ENCODE measurements at regions of chr5 and their contacts with region 1.

Region 1: GRCh38 chr5:100903039-100903887 is at the start of gene ST8SIA4:
- DNase-seq: peak; percentile 91
- H3K4me3 ChIP-seq: peak within 1 kb of the TSS; percentile 55 to 98 (median 97)
- H3K27ac ChIP-seq: peak within 1 kb of the TSS; percentile 80
- H3K4me1 ChIP-seq: peaks cover 19% of the 10 kb centered on the region
- H3K27me3 ChIP-seq: no peaks in the 10 kb centered on the region
- CTCF ChIP-seq: no peak
- POLR2A ChIP-seq: peak; percentile 57
- total RNA-seq, gene ST8SIA4: 25.0 and 28.3 TPM in 2 replicates

Region 2: GRCh38 chr5:100479079-100479688 is 424.1 kb before region 1 on chr5:
- CTCF ChIA-PET with region 1: no interaction called
- POLR2A ChIA-PET with region 1: no interaction called
- dilution Hi-C with region 1: no loop called
- intact Hi-C with region 1: loop called (anchors 2 kb)
- DNase-seq: peak; percentile 24
- H3K4me3 ChIP-seq: no peak overlapping the region
- H3K27ac ChIP-seq: no peak overlapping the region
- H3K4me1 ChIP-seq: no peaks in the 10 kb centered on the region
- H3K27me3 ChIP-seq: no peaks in the 10 kb centered on the region
- CTCF ChIP-seq: peak; percentile 20 to 25
- POLR2A ChIP-seq: no peak

Region 3: DNA sequence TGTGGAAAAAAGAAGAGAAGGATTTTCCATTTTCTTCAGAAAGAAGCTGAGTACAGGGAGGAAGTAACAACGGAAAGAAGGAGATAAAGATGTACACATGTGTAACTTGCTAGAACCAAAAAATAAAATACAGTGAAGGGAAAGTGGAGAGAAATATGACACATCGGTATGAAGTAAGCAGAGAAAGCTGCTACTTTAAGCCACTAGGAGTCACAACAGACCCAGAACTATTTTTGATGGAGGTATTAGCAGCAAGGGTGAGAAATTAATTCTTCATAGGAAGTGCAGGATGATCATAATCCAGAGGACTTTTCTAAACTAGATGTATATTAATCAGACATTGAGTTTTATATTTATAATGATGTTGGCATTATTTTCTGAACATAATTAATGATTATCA is 279.5 kb before region 1 on chr5:
- CTCF ChIA-PET with region 1: interaction called, 26 read pairs
- POLR2A ChIA-PET with region 1: interaction called, 5 read pairs
- dilution Hi-C with region 1: no loop called
- intact Hi-C with region 1: loop called (anchors 1 kb)
- DNase-seq: peak; percentile 67
- H3K4me3 ChIP-seq: no peak overlapping the region
- H3K27ac ChIP-seq: no peak overlapping the region
- H3K4me1 ChIP-seq: peaks cover 4% of the 10 kb centered on the region
- H3K27me3 ChIP-seq: no peaks in the 10 kb centered on the region
- CTCF ChIP-seq: peak; percentile 32 to 46
- POLR2A ChIP-seq: no peak

Region 4: DNA sequence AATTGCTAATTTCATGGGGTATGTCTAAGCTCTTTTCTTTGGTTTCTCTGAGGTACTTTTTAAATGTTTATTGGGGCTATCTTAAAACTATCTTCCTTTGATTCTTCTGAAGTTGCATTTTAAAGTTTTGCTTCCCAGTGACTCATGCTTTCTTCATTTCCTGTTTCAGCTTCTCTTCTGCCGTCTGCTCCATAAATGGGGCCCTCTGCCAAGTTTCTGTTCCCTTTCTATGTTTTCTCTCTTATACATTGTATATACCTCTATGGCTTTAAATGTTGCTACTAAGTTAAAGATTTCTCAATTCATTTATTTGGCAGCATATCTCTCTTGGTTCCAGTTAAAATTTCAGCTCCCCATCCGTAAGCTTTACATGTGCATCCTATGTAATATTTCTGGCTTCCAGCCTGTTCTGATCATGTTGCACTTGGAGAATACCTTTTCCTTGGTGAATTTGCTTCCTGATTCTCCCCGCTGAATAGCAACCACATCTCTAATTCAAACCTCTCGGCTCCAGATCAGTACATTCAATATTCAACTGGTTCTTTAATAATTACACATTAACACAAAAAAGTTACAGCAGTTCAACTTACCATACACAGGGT is 125.5 kb before region 1 on chr5:
- CTCF ChIA-PET with region 1: interaction called, 14 read pairs
- POLR2A ChIA-PET with region 1: interaction called, 5 read pairs
- dilution Hi-C with region 1: no loop called
- intact Hi-C with region 1: loop called (anchors 1 kb)
- DNase-seq: peak; percentile 91
- H3K4me3 ChIP-seq: peak overlapping the region in 1 of 3 experiments; percentile 21
- H3K27ac ChIP-seq: peak overlapping the region; percentile 73
- H3K4me1 ChIP-seq: peaks cover 22% of the 10 kb centered on the region
- H3K27me3 ChIP-seq: no peaks in the 10 kb centered on the region
- CTCF ChIP-seq: no peak
- POLR2A ChIP-seq: no peak

Region 5: GRCh38 chr5:100854591-100854990 is 48.7 kb before region 1 on chr5:
- CTCF ChIA-PET with region 1: interaction called, 3 read pairs
- POLR2A ChIA-PET with region 1: no interaction called
- dilution Hi-C with region 1: no loop called
- intact Hi-C with region 1: loop called (anchors 1 kb)
- DNase-seq: peak; percentile 84
- H3K4me3 ChIP-seq: no peak overlapping the region
- H3K27ac ChIP-seq: peak overlapping the region; percentile 28
- H3K4me1 ChIP-seq: peaks cover 13% of the 10 kb centered on the region
- H3K27me3 ChIP-seq: no peaks in the 10 kb centered on the region
- CTCF ChIP-seq: no peak
- POLR2A ChIP-seq: no peak

Region 6: DNA sequence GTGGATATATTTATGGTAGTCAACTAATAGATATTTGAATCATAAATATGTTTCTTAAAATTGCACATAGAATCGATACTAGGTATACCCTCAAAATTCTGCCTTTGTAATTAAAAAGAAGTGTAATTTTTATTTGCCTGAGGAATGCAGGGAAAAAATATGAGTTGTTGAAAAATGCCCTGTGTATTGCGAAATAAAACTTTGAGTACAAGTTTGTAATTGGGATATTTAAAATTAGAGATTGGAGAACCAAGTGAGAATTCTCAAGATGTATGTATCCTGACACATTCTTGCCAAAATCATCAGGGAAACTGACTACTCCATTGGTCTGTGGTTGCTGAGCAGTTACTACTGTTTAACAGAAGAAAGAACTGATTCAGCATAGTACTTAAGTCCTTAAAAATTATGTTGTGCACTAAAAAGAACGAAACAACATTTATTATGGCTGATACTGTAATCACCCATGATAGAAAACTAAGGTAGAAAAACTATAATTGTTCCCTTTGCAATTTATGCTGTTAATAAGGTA is 36.2 kb before region 1 on chr5:
- CTCF ChIA-PET with region 1: no interaction called
- POLR2A ChIA-PET with region 1: no interaction called
- dilution Hi-C with region 1: no loop called
- intact Hi-C with region 1: no loop called
- DNase-seq: no peak
- H3K4me3 ChIP-seq: no peak overlapping the region
- H3K27ac ChIP-seq: no peak overlapping the region
- H3K4me1 ChIP-seq: no peaks in the 10 kb centered on the region
- H3K27me3 ChIP-seq: no peaks in the 10 kb centered on the region
- CTCF ChIP-seq: no peak
- POLR2A ChIP-seq: no peak

Region 7: GRCh38 chr5:101390151-101390908 is 487.1 kb after region 1 on chr5:
- CTCF ChIA-PET with region 1: interaction called, 10 read pairs
- POLR2A ChIA-PET with region 1: no interaction called
- dilution Hi-C with region 1: no loop called
- intact Hi-C with region 1: loop called (anchors 2 kb)
- DNase-seq: peak; percentile 78
- H3K4me3 ChIP-seq: no peak overlapping the region
- H3K27ac ChIP-seq: no peak overlapping the region
- H3K4me1 ChIP-seq: no peaks in the 10 kb centered on the region
- H3K27me3 ChIP-seq: no peaks in the 10 kb centered on the region
- CTCF ChIP-seq: peak; percentile 49 to 60
- POLR2A ChIP-seq: no peak